ENCODE measurements at regions of chr19 and their contacts with region 1.

Region 1: GRCh38 chr19:34926685-34927375 is at the start of gene ZNF30:
- DNase-seq: peak; percentile 81 to 90
- ATAC-seq: peak; percentile 97 to 99
- H3K4me3 ChIP-seq: peak within 1 kb of the TSS; percentile 77 to 86 (median 80)
- H3K27ac ChIP-seq: peak within 1 kb of the TSS; percentile 71 to 86 (median 78)
- H3K4me1 ChIP-seq: peaks cover 8 to 14% of the 10 kb centered on the region in 2 donors
- H3K27me3 ChIP-seq: no peaks in the 10 kb centered on the region
- CTCF ChIP-seq: peak in 2 of 5 experiments; percentile 13 to 16
- POLR2A ChIP-seq: peak; percentile 11 to 47
- total RNA-seq, gene ZNF30: 0.66 to 2.3 (median 0.92) TPM

Region 2: DNA sequence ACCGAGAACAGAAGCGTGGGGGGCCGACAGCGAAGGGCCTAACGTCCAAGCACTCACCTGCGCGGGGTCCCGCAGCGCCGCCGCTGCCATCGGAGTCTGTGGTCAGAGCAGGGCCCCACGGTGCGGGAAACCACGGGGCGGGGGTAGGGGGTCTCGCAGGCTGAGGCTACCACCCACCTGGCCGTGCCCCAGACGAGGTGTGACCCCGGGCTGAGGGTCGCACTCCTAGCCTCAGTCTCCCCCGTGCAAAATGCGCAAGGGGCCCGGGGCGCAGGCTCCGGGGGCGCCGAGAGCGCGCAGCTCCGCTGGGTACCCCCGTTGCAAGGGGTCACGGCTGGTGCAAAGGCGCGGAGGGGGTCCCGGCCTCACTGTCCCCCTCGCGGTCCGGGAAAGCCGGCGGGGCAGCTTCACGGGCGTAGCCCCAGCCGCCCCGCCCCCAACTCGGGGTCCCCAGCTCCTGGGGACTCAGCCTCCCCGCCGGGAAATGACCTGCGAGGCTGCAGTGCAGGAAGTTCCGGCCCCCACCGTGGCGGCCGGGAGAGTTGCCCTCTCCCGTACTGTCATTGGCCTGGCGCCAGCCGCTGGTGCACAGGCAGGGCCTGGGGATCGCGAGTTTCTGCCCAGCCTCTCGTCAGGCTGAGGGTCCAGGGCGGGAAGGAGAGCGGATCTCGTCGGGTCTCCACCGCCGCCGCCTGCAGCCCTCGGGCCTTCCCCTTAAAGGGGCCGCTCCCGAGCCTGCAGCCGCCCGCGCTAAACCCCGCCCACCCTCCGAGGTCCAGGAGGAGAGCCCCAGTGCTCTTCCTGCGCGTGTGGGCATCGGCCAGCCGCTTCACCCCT is 37.0 kb after region 1 on chr19 and contains the start of gene ZNF792:
- in situ Hi-C with region 1: no loop called
- intact Hi-C with region 1: loop called (anchors 5 kb)
- DNase-seq: peak; percentile 23 to 43
- ATAC-seq: peak in 1 of 2 donors; percentile 71
- H3K4me3 ChIP-seq: peak within 1 kb of the TSS; percentile 85 to 95 (median 90)
- H3K27ac ChIP-seq: peak within 1 kb of the TSS; percentile 42 to 75 (median 65)
- H3K4me1 ChIP-seq: peaks cover 15 to 18% of the 10 kb centered on the region in 2 donors
- H3K27me3 ChIP-seq: no peaks in the 10 kb centered on the region
- CTCF ChIP-seq: no peak
- POLR2A ChIP-seq: no peak
- total RNA-seq, gene ZNF792: 1.7 to 3.5 (median 2.7) TPM

Region 3: DNA sequence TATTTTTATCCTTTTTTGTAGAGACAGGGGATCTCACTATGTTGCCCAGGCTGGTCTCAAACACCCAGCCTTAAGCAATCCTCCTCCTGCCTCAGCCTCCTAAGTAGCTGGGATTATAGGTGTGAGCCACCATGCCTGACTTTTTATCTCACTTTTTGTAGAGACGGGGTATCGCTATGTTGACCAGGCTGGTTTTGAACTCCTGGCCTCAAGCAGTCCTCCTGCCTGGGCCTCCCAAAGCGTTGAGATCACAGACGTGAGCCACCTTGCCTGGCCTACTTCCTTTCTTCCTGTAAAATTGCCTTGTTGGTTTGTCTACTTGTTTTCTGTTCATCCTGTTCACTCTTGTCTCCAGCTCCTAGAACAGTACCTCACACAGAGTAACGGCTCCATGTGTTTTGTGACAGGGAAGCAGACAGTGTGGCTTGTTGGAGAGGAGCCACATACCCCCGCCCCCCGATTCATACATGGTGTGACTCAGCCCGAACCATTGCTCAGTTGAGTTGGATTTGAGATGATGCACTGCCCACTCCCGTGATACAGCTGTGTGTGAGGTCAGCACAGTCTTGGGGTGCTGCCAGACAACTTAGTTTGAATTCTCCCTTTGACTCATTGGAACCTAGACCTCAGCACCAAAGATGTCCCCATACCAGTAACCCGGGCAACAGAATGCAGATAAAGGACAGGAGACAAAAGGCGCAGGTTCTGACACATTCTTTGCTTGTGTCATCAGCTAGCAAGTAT is 478.2 kb after region 1 on chr19:
- in situ Hi-C with region 1: no loop called
- intact Hi-C with region 1: no loop called
- DNase-seq: no peak
- ATAC-seq: no peak
- H3K4me3 ChIP-seq: no peak overlapping the region
- H3K27ac ChIP-seq: no peak overlapping the region
- H3K4me1 ChIP-seq: no peaks in the 10 kb centered on the region
- H3K27me3 ChIP-seq: no peaks in the 10 kb centered on the region
- CTCF ChIP-seq: no peak
- POLR2A ChIP-seq: no peak